Endothelial cell of umbilical vein (primary cell): ENCODE measurements at regions of chr14 and their contacts with region 1.

Region 1: DNA sequence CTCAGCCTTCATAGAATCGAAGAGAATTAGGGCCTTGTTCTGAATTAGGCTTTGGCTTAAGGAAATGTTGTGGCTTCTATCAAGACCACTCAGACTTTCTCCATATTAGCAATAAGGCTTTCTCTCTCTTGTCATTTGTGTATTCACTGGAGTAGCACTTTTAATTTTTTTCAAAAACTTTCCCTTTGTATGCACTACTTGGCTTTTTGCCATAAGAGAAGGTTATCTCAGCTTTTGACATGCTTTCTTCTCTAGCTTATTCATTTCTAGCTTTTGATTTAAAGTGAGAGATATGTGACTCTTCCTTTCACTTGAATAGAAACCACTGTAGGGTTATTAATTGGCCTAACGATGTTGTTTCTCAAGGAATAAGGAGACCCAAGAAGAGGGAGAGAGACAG is 244.2 kb downstream of the GPHN start:
- DNase-seq: peak; percentile 35
- H3K4me3 ChIP-seq: no peak overlapping the region
- H3K27ac ChIP-seq: no peak overlapping the region
- H3K4me1 ChIP-seq: no peaks in the 10 kb centered on the region
- H3K27me3 ChIP-seq: no peaks in the 10 kb centered on the region
- CTCF ChIP-seq: no peak
- POLR2A ChIP-seq: no peak

Region 2: DNA sequence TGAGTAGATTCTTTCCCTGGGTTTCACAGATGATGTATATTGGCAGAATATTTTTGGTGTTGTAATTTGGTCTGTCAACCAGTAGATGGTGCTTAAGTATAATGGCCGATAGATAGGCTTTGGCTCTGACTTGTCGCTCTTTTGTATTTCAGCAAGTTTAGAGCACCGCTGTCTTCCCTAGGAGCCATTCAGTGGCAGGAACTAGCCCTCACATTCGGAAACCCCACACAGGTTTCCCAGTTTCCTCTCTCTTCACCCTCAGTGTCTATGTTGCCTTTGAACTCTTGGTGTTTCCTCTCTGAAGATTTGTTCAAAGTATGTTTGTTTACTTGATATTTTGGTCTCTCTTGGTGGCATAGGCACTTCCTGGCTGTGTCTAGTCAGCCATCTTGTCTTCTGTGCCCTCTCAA is 141.9 kb before region 1 on chr14:
- CTCF ChIA-PET with region 1: no interaction called
- POLR2A ChIA-PET with region 1: no interaction called
- dilution Hi-C with region 1: no loop called
- intact Hi-C with region 1: no loop called
- DNase-seq: no peak
- H3K4me3 ChIP-seq: no peak overlapping the region
- H3K27ac ChIP-seq: no peak overlapping the region
- H3K4me1 ChIP-seq: no peaks in the 10 kb centered on the region
- H3K27me3 ChIP-seq: no peaks in the 10 kb centered on the region
- CTCF ChIP-seq: peak; percentile 32 to 40
- POLR2A ChIP-seq: no peak

Region 3: DNA sequence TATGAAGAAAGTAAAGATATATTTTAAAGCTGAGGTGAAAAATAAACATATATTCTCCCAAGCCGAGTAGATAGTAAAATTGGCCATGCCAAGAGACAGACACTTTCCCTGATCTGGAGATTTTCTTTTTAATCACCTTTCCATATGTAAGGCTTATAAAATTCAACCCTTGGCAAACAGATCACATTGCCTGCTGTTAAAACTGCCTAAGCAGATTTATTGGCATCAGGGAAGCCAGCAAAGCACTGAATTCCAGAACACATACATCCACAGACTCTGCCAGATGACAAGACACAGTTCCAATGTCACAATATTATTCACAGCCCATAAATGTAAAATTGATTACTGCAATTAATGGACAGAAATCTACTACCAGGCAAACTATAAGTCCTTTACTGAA is 358.9 kb after region 1 on chr14:
- CTCF ChIA-PET with region 1: no interaction called
- POLR2A ChIA-PET with region 1: no interaction called
- dilution Hi-C with region 1: no loop called
- intact Hi-C with region 1: loop called (anchors 10 kb)
- DNase-seq: no peak
- H3K4me3 ChIP-seq: no peak overlapping the region
- H3K27ac ChIP-seq: no peak overlapping the region
- H3K4me1 ChIP-seq: no peaks in the 10 kb centered on the region
- H3K27me3 ChIP-seq: no peaks in the 10 kb centered on the region
- CTCF ChIP-seq: no peak
- POLR2A ChIP-seq: no peak